GM10248 (cell line): ENCODE measurements at regions of chr7 and their contacts with region 1.

Region 1: GRCh38 chr7:28759475-28759971 is 198.6 kb downstream of the TRIL start:
- DNase-seq: no peak
- CTCF ChIP-seq: no peak

Region 2: DNA sequence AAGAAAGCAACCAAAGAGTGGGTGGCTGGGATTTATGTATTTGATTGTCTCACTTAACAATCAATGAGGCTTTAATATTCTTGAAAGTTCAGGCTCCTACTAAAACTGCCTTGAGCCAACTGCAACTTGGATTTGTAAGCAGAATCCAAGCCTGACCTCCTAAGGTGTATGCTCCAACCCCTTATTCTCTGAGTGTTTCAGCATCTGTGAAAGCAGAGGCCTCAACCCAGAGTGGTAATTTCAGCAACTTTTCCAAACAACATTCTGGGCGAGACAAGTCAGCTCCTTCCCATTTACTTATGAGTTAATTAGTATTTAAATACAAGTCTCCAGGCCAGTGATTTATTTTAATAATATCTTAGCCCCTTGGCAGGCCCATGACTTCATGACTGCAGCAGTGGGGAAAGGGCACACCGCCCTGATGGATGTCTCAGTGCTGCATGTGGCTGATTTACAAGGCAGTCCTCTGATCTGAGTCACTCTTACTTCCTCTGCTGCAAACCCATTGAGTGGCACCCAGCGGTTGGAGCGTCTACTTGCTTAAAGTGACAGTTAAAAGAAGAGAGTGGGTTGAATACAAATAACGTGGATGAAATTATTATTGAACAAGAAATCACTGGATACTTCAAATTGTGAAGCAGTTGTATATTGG is 10.5 kb before region 1 on chr7:
- CTCF ChIA-PET with region 1: interaction called, 11 read pairs
- POLR2A ChIA-PET with region 1: no interaction called
- DNase-seq: peak; percentile 17
- CTCF ChIP-seq: no peak